Left ventricle myocardium superior (tissue), 1 donor: ENCODE measurements at regions of chr15 and their contacts with region 1.

Region 1: GRCh38 chr15:67456677-67457529 is 64.0 kb upstream of the C15orf61 start:
- DNase-seq: peak; percentile 87
- ATAC-seq: peak; percentile 86

Region 2: DNA sequence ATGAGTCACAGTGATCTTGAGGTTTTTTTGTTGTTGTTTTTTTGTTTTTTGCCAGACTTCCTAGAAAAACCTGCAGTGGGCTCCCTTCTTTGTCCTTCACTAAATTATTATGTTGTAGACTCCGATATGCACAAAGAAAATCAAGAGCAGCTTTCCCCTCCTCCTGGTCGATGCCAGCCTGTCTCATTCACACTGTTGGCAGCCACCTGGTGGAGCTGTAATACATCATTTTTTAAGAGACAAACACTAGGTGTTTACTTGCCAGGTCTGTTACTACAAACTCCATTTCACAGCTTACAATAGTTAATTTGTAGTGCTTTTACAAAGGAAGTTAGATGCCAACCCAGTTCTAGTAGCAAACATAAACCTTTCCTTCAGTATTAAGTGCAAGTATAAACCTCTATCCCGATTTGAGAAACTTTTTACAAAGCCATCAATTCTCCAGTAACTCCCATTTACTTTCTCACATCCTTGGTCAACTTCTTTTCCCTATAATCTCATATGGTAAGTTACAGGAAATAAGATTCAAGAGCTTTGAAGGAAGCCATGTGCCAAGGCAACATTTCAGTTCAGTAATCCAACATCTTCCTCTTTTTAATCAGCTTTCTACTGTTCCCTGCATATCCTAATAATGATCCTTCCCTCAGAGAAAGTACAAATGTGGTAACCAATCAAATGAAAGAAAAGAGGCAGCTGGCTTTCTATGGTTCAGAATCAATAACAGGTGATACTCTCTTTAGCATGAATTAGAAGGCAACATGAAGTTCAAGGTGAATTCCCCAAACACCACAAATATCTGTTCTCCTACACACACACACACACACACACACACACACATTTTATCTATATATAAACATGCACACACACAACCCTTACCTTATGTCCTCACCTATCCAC is 216.4 kb before region 1 on chr15:
- intact Hi-C with region 1: no loop called
- DNase-seq: no peak
- ATAC-seq: peak; percentile 50

Region 3: GRCh38 chr15:67839929-67840748 is 383.2 kb after region 1 on chr15 and contains the start of gene RNU6-1:
- intact Hi-C with region 1: loop called (anchors 10 kb)
- DNase-seq: peak; percentile 97
- ATAC-seq: peak; percentile 91
- total RNA-seq, gene RNU6-1: not detected